Activated CD4-positive, alpha-beta memory T cell treated with anti-CD3 and anti-CD28 coated beads for 36 hours (primary cell): ENCODE measurements at regions of chr16 and their contacts with region 1.

Region 1: DNA sequence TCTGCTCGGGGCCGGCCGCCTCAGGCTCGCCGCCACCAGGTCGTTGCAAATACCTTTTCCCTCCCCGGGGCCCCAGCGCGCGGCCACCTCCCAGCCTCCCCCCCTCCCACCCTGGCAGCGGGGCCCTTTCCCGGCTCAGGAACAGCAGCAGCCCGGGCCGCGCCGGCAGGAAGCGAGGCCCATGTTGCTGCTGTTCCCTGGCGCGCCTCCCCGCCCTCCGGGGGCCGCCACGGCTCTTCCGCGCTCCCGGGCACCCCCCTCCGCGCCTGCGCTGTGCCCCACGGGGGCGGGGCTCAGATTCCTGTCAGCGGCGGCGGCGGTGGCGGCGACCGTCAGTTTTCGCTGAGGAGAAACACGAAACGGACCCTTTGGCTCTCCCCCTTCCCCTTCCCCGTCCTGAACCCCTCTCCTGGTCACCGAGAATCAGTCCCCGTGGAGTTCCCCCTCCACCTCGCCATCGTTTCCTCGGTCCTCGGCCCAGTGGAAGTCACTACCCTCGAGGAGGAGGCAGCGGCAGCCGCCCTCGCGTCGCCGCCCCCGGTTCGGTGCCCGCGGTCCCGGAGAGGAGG is at the start of gene NFAT5:
- DNase-seq: peak; percentile 92
- H3K4me3 Mint-ChIP-seq: peak within 1 kb of the TSS; percentile 96
- H3K27ac Mint-ChIP-seq: peak within 1 kb of the TSS; percentile 94
- H3K4me1 Mint-ChIP-seq: peaks cover 45% of the 10 kb centered on the region
- H3K27me3 Mint-ChIP-seq: no peaks in the 10 kb centered on the region
- total RNA-seq, gene NFAT5: 28.2 to 32.7 TPM

Region 2: GRCh38 chr16:69339289-69340108 is 226.3 kb before region 1 on chr16 and contains the starts of genes COG8 and NIP7:
- CTCF ChIA-PET with region 1: no interaction called
- POLR2A ChIA-PET with region 1: interaction called, 3 read pairs
- intact Hi-C with region 1: loop called (anchors 2 kb)
- DNase-seq: peak; percentile 96
- H3K4me3 Mint-ChIP-seq: peak within 1 kb of the TSS; percentile 96
- H3K27ac Mint-ChIP-seq: peak within 1 kb of the TSS; percentile 95
- H3K4me1 Mint-ChIP-seq: peaks cover 38% of the 10 kb centered on the region
- H3K27me3 Mint-ChIP-seq: no peaks in the 10 kb centered on the region
- total RNA-seq, gene COG8: 25.4 to 27.9 TPM
- total RNA-seq, gene NIP7: 43.3 to 47.1 TPM

Region 3: DNA sequence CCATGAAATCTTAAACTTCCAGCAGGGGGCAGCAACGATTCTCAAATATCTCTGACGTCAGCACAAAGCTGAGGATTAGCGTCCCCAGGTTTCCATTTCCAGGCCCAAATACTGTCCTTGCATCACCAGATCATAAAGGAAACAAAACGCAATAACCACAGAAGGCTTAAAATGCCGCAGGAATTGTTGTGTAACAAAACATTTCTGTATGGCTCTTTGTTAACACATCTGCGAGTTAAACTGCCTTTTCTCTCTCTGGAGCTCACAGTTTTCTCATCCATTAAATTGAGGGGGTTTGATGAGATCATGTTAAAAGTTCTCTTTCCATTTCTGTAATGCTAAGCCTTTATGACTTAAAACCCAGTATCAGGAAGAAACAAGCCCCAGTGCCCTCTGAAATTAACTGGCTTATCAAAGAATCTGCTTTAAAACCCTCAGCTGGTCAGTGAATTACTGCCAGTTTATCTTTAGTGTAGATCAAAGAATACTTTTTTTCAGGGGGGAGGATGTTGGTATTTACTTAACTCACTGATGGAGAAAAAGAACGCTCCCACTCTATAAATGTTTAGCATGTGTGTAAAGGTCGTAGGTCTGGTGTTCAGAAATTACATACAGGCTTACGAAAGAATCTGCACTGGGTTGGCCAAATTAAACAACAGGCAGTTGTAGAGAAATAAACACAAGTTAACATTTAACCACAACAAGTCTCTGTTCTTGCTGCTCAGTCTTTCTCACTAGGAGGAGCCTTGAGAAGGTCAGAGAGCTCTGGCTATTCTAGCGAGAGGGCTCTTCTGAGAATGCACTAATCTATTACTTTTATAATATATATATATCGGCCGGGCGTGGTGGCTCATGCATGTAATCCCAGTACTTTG is 169.3 kb before region 1 on chr16:
- CTCF ChIA-PET with region 1: interaction called, 23 read pairs
- POLR2A ChIA-PET with region 1: no interaction called
- intact Hi-C with region 1: loop called (anchors 1 kb)
- DNase-seq: peak; percentile 74
- H3K4me3 Mint-ChIP-seq: no peak overlapping the region
- H3K27ac Mint-ChIP-seq: peak overlapping the region; percentile 58
- H3K4me1 Mint-ChIP-seq: peaks cover 11% of the 10 kb centered on the region
- H3K27me3 Mint-ChIP-seq: peaks cover 2% of the 10 kb centered on the region

Region 4: DNA sequence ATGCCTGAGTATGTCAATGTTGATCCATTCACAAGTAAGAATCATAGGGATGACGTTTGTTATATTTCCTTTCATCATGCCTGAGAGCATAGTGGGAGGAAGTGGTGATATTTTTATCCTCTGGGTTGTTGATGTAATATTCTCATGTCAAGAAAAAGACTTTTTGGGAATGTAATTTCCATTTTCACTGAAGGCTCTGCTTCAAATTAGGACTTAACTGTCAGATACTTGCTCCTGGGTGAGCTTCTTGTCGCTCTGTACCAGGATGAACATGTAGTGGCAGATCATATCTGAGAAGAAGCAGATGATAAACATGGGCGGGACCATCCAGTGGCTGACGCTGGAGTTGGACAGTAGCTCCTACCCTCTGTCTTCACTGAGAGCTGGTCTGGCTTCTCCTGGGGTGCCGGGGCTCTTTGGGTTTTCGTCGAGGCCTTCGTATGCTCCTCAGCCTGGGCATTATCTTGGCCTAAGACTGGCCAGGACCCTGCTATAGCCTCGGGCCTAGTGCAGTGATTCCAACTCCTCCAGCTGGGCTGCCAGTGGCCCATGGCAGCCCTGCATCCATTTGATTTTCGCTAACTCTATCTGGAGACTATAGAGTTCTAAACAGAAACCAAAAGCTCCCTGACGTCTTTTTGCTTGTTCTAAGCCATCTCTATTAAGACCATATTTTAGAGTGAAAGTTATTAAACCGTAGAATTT is 121.7 kb before region 1 on chr16:
- CTCF ChIA-PET with region 1: interaction called, 3 read pairs
- POLR2A ChIA-PET with region 1: interaction called, 3 read pairs
- intact Hi-C with region 1: loop called (anchors 2 kb)
- DNase-seq: peak; percentile 41
- H3K4me3 Mint-ChIP-seq: peak overlapping the region; percentile 62
- H3K27ac Mint-ChIP-seq: peak overlapping the region; percentile 88
- H3K4me1 Mint-ChIP-seq: peaks cover 39% of the 10 kb centered on the region
- H3K27me3 Mint-ChIP-seq: no peaks in the 10 kb centered on the region

Region 5: DNA sequence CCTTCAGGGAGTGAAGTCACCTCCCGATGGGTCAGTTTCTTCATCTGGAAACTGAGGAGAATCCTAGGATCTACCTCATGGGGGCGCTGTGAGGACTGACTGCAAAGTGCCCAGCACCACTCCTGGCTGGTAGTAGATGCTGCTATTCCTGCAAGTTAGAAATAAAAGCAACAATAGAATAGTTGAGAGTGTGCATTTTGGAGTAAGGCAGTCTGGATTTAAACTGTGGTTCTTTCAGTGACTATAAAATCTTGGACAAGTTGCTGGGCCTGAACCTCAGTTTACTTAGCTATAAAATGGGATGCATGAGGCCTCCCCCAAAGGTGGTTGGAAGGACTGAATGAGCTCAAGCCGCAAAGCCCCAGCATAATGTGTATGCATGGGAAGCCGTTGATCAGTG is 70.8 kb before region 1 on chr16:
- CTCF ChIA-PET with region 1: interaction called, 3 read pairs
- POLR2A ChIA-PET with region 1: no interaction called
- intact Hi-C with region 1: loop called (anchors 1 kb)
- DNase-seq: peak; percentile 73
- H3K4me3 Mint-ChIP-seq: no peak overlapping the region
- H3K27ac Mint-ChIP-seq: no peak overlapping the region
- H3K4me1 Mint-ChIP-seq: no peaks in the 10 kb centered on the region
- H3K27me3 Mint-ChIP-seq: no peaks in the 10 kb centered on the region

Region 6: DNA sequence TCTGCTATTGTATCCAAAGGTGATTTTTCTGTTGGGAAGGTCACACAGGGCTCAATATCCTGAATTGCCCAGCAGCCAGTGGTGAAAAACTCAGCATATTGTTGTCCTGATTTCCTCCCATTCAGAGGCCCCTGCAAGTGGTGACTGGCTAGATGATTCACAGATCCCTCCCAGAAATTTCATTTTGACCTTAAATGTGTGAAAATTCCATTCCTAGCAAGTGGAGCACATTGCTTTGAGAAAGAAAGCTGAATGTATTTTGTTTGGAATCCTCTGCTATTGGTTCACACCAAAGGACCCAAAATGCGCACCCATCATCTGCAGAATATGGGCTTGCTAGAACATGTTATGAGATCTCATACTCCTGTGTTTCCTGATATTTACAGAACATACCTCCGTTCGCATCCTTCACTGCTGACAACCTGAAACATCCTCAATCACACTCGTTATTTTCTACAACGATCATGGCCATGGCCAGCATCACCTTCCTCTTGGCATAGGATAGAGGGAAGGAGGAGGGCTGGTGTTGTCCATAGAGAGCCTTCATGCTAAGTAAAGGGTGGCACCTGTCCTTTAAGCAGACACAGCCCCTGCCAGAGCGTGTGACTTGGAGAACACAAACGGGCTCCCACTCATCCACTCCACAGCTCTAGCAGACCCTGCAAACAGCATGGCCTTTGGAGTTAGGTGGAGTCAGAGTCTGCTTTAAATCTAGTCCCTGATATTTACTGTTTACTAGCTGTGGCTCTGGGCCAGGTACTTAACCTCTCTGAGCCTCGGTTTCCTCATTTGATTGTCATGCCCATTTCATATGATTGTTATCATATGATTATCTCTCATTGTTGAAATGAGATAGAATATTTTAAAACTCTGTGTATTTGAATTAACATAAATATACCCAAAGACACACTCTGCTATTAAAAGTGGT is 30.4 kb before region 1 on chr16:
- CTCF ChIA-PET with region 1: interaction called, 6 read pairs
- POLR2A ChIA-PET with region 1: interaction called, 10 read pairs
- intact Hi-C with region 1: loop called (anchors 1 kb)
- DNase-seq: no peak
- H3K4me3 Mint-ChIP-seq: no peak overlapping the region
- H3K27ac Mint-ChIP-seq: no peak overlapping the region
- H3K4me1 Mint-ChIP-seq: peaks cover 21% of the 10 kb centered on the region
- H3K27me3 Mint-ChIP-seq: no peaks in the 10 kb centered on the region

Region 7: GRCh38 chr16:69626256-69626655 is 60.5 kb after region 1 on chr16:
- CTCF ChIA-PET with region 1: no interaction called
- POLR2A ChIA-PET with region 1: no interaction called
- intact Hi-C with region 1: no loop called
- DNase-seq: no peak
- H3K4me3 Mint-ChIP-seq: no peak overlapping the region
- H3K27ac Mint-ChIP-seq: no peak overlapping the region
- H3K4me1 Mint-ChIP-seq: peaks cover 3% of the 10 kb centered on the region
- H3K27me3 Mint-ChIP-seq: no peaks in the 10 kb centered on the region

Region 8: GRCh38 chr16:69709456-69710084 is 143.8 kb after region 1 on chr16:
- CTCF ChIA-PET with region 1: no interaction called
- POLR2A ChIA-PET with region 1: no interaction called
- intact Hi-C with region 1: no loop called
- DNase-seq: no peak
- H3K4me3 Mint-ChIP-seq: no peak overlapping the region
- H3K27ac Mint-ChIP-seq: no peak overlapping the region
- H3K4me1 Mint-ChIP-seq: peaks cover 7% of the 10 kb centered on the region
- H3K27me3 Mint-ChIP-seq: no peaks in the 10 kb centered on the region

Region 9: GRCh38 chr16:69754469-69755310 is 188.9 kb after region 1 on chr16 and contains the start of gene NOB1:
- CTCF ChIA-PET with region 1: interaction called, 3 read pairs
- POLR2A ChIA-PET with region 1: interaction called, 3 read pairs
- intact Hi-C with region 1: loop called (anchors 2 kb)
- DNase-seq: peak; percentile 98
- H3K4me3 Mint-ChIP-seq: peak within 1 kb of the TSS; percentile 100
- H3K27ac Mint-ChIP-seq: peak within 1 kb of the TSS; percentile 98
- H3K4me1 Mint-ChIP-seq: peaks cover 23% of the 10 kb centered on the region
- H3K27me3 Mint-ChIP-seq: no peaks in the 10 kb centered on the region
- total RNA-seq, gene NOB1: 92.4 to 95.2 TPM